ENCODE measurements at regions of chr6 and their contacts with region 1.

Region 1: GRCh38 chr6:7479801-7480266 is 61.6 kb upstream of the DSP start:
- DNase-seq: no peak
- ATAC-seq: peak in 3 of 8 donors; percentile 39 to 71 (median 42)
- H3K4me3 ChIP-seq: peak overlapping the region in 3 of 10 donors; percentile 19 to 24 (median 20)
- H3K27ac ChIP-seq: no peak overlapping the region
- H3K4me1 ChIP-seq: peaks cover 0 to 4% (median 0%) of the 10 kb centered on the region in 9 donors
- H3K27me3 ChIP-seq: no peaks in the 10 kb centered on the region
- CTCF ChIP-seq: no peak

Region 2: GRCh38 chr6:5684320-5685053 is 1795.3 kb before region 1 on chr6:
- intact Hi-C with region 1: loop called in 1 of 10 experiments (anchors 5 kb)
- DNase-seq: no peak
- ATAC-seq: no peak
- H3K4me3 ChIP-seq: no peak overlapping the region
- H3K27ac ChIP-seq: no peak overlapping the region
- H3K4me1 ChIP-seq: peaks cover 0 to 27% (median 0%) of the 10 kb centered on the region in 9 donors
- H3K27me3 ChIP-seq: no peaks in the 10 kb centered on the region
- CTCF ChIP-seq: no peak

Region 3: GRCh38 chr6:7446619-7447325 is 33.1 kb before region 1 on chr6:
- intact Hi-C with region 1: no loop called
- DNase-seq: no peak
- ATAC-seq: peak in 2 of 8 donors; percentile 47 to 61
- H3K4me3 ChIP-seq: no peak overlapping the region
- H3K27ac ChIP-seq: no peak overlapping the region
- H3K4me1 ChIP-seq: no peaks in the 10 kb centered on the region
- H3K27me3 ChIP-seq: peaks cover 0 to 8% (median 5%) of the 10 kb centered on the region in 7 donors
- CTCF ChIP-seq: no peak

Region 4: GRCh38 chr6:7463785-7464184 is 16.0 kb before region 1 on chr6:
- intact Hi-C with region 1: no loop called
- DNase-seq: no peak
- ATAC-seq: no peak
- H3K4me3 ChIP-seq: no peak overlapping the region
- H3K27ac ChIP-seq: no peak overlapping the region
- H3K4me1 ChIP-seq: peaks cover 0 to 21% (median 15%) of the 10 kb centered on the region in 9 donors
- H3K27me3 ChIP-seq: no peaks in the 10 kb centered on the region
- CTCF ChIP-seq: no peak

Region 5: GRCh38 chr6:7502743-7503142 is 22.9 kb after region 1 on chr6:
- intact Hi-C with region 1: no loop called
- DNase-seq: no peak
- ATAC-seq: peak in 6 of 8 donors; percentile 25 to 62 (median 50)
- H3K4me3 ChIP-seq: no peak overlapping the region
- H3K27ac ChIP-seq: no peak overlapping the region
- H3K4me1 ChIP-seq: peaks cover 0 to 6% (median 4%) of the 10 kb centered on the region in 9 donors
- H3K27me3 ChIP-seq: no peaks in the 10 kb centered on the region
- CTCF ChIP-seq: no peak

Region 6: GRCh38 chr6:7532230-7532629 is 52.4 kb after region 1 on chr6:
- intact Hi-C with region 1: loop called in 1 of 10 experiments (anchors 10 kb)
- DNase-seq: no peak
- ATAC-seq: no peak
- H3K4me3 ChIP-seq: no peak overlapping the region
- H3K27ac ChIP-seq: no peak overlapping the region
- H3K4me1 ChIP-seq: peaks cover 0 to 12% (median 0%) of the 10 kb centered on the region in 9 donors
- H3K27me3 ChIP-seq: peaks cover 0 to 49% (median 17%) of the 10 kb centered on the region in 7 donors
- CTCF ChIP-seq: no peak

Region 7: DNA sequence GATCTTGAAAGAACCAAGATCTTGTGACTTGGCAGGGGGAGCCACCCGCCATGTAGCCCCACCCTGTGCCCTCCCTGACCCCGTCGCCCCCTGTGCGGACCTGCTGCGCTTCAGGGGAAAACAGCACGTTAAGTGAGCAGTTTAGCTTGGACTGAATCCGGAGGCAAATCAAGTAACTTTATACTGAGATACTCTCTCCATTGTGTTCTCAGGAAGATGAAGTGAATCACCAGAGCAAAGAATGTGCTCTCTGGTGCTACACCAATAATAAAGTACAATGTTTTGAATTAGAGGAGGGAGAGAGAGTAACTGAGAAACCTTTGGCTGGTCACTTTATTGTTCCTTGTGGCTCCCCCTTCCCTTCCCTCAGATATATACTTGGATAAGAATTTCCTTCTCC is 347.3 kb after region 1 on chr6:
- intact Hi-C with region 1: no loop called
- DNase-seq: no peak
- ATAC-seq: peak in 3 of 8 donors; percentile 9 to 41 (median 37)
- H3K4me3 ChIP-seq: no peak overlapping the region
- H3K27ac ChIP-seq: peak overlapping the region in 1 of 10 donors; percentile 6
- H3K4me1 ChIP-seq: peaks cover 0 to 16% (median 6%) of the 10 kb centered on the region in 9 donors
- H3K27me3 ChIP-seq: peaks cover 0 to 7% (median 0%) of the 10 kb centered on the region in 7 donors
- CTCF ChIP-seq: no peak

Measured in heart right ventricle (tissue), 16 donors.